ENCODE measurements at regions of chr13 and their contacts with region 1.

Region 1: GRCh38 chr13:49279885-49280284 is 32.2 kb downstream of the CDADC1 start:
- DNase-seq: no peak
- H3K4me3 Mint-ChIP-seq: no peak overlapping the region
- H3K27ac Mint-ChIP-seq: no peak overlapping the region
- H3K4me1 Mint-ChIP-seq: no peaks in the 10 kb centered on the region
- H3K27me3 Mint-ChIP-seq: no peaks in the 10 kb centered on the region

Region 2: DNA sequence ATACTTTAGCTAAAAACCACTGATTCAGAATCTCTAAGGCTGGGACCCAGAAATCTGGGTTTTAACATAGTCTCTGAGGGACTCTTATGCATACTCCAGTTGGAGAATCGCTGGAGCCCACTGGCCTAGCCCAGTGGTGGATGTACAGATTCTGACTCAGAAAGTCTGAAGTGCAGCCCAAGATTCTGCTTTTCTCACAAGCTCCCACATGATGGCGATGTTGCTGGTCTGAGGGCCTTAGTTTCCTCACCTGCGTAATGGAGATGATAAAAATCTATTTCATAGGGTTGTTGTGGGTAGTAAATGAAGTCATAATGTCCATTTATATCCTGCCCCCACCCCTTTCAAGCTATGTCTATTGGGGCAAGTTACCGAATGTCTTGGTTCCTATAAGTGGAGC is 39.9 kb before region 1 on chr13:
- CTCF ChIA-PET with region 1: interaction called, 97 read pairs
- DNase-seq: peak; percentile 63
- H3K4me3 Mint-ChIP-seq: no peak overlapping the region
- H3K27ac Mint-ChIP-seq: no peak overlapping the region
- H3K4me1 Mint-ChIP-seq: no peaks in the 10 kb centered on the region
- H3K27me3 Mint-ChIP-seq: peaks cover 43% of the 10 kb centered on the region

Region 3: GRCh38 chr13:49247643-49248621 is 32.0 kb before region 1 on chr13 and contains the start of gene CDADC1:
- CTCF ChIA-PET with region 1: interaction called, 97 read pairs
- DNase-seq: peak; percentile 96
- H3K4me3 Mint-ChIP-seq: peak within 1 kb of the TSS; percentile 91
- H3K27ac Mint-ChIP-seq: peak within 1 kb of the TSS; percentile 92
- H3K4me1 Mint-ChIP-seq: peaks cover 45% of the 10 kb centered on the region
- H3K27me3 Mint-ChIP-seq: peaks cover 22% of the 10 kb centered on the region

Region 4: DNA sequence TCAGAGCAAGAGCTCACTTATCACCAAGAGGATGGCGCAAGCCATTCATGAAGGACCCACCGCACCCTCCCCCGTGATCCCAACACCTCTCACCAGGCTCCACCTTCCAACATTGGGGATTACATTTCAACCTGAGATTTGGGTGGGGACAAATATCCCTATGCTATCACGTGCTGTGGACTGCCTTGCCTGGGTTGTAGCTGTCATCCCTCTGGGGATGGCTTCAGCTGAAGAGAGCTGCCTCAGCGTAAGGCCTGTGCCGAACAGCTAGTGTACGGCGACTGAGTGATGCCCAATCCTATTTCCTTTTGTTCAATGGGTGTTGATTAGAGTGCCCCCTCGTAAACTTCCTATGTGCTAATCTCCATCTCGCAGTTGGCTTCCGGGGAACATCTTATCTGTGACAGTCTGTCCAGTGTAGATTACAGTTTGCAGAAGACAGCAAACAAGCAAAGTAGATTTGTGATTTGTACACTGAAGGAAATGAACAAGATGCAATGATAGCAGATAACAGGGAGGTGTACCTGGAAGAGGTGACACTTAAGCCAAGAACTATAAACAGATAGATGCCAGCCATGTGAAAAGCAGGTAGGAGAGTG is 317.3 kb after region 1 on chr13:
- CTCF ChIA-PET with region 1: no interaction called
- DNase-seq: no peak
- H3K4me3 Mint-ChIP-seq: no peak overlapping the region
- H3K27ac Mint-ChIP-seq: no peak overlapping the region
- H3K4me1 Mint-ChIP-seq: no peaks in the 10 kb centered on the region
- H3K27me3 Mint-ChIP-seq: peaks cover 4% of the 10 kb centered on the region